Activated B cell treated with CpG ODN at 0.5 μM for 24 hours (primary cell): ENCODE measurements at regions of chr3 and their contacts with region 1.

Region 1: DNA sequence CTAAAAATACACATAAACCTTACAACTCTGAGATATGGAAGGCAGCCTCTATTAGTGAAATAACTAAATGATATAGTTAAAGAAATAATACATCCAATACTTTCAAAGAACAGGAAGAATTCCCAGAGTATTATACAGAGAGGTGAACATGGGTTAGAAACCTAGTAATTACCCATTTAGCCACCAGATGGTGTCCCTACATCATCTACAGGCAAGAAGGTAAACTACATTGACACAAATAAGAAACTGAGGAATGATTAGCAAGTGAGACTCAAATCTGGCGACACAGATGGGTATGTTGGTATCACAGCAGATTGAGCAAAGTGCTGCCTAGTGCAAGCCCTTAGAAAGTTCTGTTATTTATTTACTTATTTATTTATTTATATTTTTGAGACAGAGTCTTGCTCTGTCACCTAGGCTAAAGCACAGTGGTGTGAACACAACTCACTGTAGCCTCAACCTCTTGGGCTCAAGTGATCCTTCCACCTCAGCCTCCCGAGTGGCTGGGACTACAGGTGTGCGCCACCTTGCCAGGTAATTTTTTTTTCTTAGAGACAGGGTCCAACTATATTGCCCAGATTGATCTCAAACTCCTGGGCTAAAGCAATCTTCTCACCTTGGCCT is 28.2 kb downstream of the NEK4 start:
- DNase-seq: no peak
- ATAC-seq: peak; percentile 45
- H3K4me3 Mint-ChIP-seq: no peak overlapping the region
- H3K27ac Mint-ChIP-seq: no peak overlapping the region
- H3K4me1 Mint-ChIP-seq: no peaks in the 10 kb centered on the region
- H3K27me3 Mint-ChIP-seq: no peaks in the 10 kb centered on the region
- CTCF ChIP-seq: peak; percentile 43

Region 2: DNA sequence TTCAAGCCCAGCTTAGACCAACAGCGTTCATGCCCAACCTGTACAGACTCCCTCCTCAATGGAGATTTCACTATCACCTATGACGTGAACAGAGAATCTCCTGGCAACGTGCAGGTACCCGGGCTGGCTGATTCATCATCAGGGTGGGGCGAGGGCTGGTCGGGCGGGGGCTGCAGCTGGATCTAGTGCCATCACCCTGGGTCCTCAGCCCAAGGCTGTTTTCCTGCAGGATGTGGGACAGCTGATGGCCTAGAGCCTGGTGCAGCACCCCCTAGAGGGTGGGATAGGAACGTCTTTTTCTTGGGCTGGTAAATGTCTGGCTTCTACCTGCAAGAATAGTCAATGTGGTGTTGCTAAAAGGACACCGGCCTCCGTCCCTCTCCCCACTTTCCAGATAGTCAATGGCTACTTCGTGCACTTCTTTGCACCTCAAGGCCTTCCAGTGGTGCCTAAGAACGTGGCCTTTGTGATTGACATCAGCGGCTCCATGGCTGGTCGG is 56.5 kb after region 1 on chr3:
- CTCF ChIA-PET with region 1: interaction called, 4 read pairs
- POLR2A ChIA-PET with region 1: no interaction called
- intact Hi-C with region 1: loop called (anchors 1 kb)
- DNase-seq: no peak
- ATAC-seq: no peak
- H3K4me3 Mint-ChIP-seq: no peak overlapping the region
- H3K27ac Mint-ChIP-seq: no peak overlapping the region
- H3K4me1 Mint-ChIP-seq: no peaks in the 10 kb centered on the region
- H3K27me3 Mint-ChIP-seq: no peaks in the 10 kb centered on the region
- CTCF ChIP-seq: no peak

Region 3: GRCh38 chr3:52820736-52821135 is 78.2 kb after region 1 on chr3:
- CTCF ChIA-PET with region 1: interaction called, 6 read pairs
- POLR2A ChIA-PET with region 1: no interaction called
- intact Hi-C with region 1: loop called (anchors 1 kb)
- DNase-seq: no peak
- ATAC-seq: no peak
- H3K4me3 Mint-ChIP-seq: no peak overlapping the region
- H3K27ac Mint-ChIP-seq: no peak overlapping the region
- H3K4me1 Mint-ChIP-seq: no peaks in the 10 kb centered on the region
- H3K27me3 Mint-ChIP-seq: no peaks in the 10 kb centered on the region
- CTCF ChIP-seq: no peak

Region 4: DNA sequence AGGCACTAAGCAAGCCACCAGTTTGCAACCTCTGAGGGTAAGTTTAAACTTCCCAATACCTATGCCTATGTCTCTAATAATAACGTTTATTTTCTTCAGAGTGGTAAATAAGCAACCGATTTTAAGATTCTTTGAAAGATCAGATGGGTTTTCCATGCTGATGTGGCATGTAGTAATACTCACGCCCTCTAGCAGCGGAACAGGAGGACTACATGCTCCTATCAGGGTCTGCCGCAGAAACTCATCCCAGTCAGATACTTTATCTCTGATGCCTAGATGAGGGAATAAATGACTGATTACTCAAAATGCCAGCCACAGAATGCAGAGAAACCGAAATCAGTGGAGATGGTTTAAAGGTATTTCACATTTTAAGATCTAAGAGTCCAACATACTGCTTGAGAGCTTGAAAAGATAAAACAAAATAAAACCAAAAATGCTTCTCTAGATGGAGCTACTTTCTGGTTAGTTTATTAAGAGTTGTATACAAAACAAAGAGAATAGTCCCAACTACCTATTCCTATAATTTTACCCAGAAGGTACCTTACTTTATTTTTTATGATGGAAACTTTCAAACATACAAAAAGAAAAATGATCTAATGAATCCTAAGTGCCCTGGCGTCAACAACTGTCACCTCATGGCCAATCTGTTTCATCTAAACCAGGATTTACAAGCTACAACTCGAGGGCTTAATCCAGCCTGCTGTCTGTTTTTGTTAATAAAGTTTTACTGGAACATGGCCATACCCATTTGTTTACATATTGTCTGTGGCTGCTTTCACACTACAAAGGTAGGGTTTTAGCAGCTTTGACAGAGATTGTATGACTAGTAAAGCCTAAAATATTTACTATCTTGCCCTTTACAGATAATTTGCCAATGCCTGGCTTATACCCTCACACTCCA is 192.3 kb after region 1 on chr3:
- CTCF ChIA-PET with region 1: interaction called, 3 read pairs
- POLR2A ChIA-PET with region 1: no interaction called
- intact Hi-C with region 1: loop called (anchors 1 kb)
- DNase-seq: no peak
- ATAC-seq: peak; percentile 87
- H3K4me3 Mint-ChIP-seq: no peak overlapping the region
- H3K27ac Mint-ChIP-seq: peak overlapping the region; percentile 22
- H3K4me1 Mint-ChIP-seq: peaks cover 25% of the 10 kb centered on the region
- H3K27me3 Mint-ChIP-seq: no peaks in the 10 kb centered on the region
- CTCF ChIP-seq: peak; percentile 58